Breast epithelium (tissue), 4 donors: ENCODE measurements at regions of chr4 and their contacts with region 1.

Region 1: GRCh38 chr4:13980317-13981310 is 353.1 kb upstream of the BOD1L1 start:
- DNase-seq: no peak
- H3K4me3 ChIP-seq: no peak overlapping the region
- H3K27ac ChIP-seq: no peak overlapping the region
- H3K4me1 ChIP-seq: no peaks in the 10 kb centered on the region
- H3K27me3 ChIP-seq: no peaks in the 10 kb centered on the region
- CTCF ChIP-seq: no peak
- POLR2A ChIP-seq: no peak

Region 2: DNA sequence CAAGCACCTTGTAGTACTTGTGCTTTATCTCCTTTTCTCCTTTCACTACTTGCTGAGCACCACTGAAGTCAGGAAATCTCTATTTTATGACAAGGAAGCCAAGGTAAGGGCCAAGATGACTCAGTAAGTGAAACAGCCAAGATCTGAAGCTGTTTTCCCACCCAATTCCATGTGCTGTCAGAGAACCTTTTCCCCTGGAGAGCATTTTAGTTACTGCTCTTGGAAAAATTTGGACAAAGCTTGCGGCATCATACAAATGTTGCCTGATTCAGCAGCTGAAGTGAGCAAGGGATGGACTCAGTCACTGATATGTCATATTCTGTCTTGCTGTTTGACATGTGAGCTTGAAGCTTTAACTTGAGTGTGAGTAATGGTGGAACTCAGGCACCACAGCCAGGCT is 887.9 kb before region 1 on chr4:
- intact Hi-C with region 1: loop called (anchors 10 kb)
- DNase-seq: no peak
- H3K4me3 ChIP-seq: no peak overlapping the region
- H3K27ac ChIP-seq: no peak overlapping the region
- H3K4me1 ChIP-seq: no peaks in the 10 kb centered on the region
- H3K27me3 ChIP-seq: no peaks in the 10 kb centered on the region
- CTCF ChIP-seq: no peak
- POLR2A ChIP-seq: no peak